ENCODE measurements at regions of chr20 and their contacts with region 1.

Region 1: DNA sequence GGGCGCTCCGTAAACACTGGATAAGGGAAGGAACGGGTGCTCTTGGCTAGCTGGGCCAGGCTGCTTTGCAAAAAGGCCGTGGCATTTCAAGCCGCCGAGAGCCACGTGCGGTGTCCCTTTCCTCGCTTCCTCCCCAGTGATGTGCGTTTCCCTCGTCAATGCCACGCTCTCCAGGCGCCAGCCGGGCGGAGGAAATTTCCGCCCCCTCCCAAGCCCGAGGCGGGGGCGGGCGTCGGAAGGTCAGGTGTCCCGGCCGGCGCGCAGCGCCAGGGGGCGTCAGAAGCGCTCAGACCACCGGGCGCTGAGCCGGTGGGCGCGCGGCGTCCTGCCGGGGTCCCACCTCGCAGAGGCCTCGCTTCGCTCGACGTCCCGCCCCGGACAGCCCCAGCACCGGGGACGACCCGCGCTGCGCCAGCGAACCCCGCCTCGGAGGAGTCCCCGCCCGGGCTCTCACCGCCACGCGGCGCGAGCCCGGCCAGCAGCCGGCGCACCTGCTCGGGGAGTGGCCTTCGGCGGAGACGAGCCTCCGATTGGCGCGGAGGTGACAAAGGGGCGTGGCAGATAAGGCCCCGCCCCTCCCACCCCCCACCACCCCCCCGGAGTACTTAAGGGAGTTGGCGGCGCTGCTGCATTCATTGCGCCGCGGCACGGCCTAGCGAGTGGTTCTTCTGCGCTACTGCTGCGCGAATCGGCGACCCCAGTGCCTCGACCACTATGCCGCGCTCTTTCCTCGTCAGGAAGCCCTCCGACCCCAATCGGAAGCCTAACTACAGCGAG is at the start of gene SNAI1:
- DNase-seq: peak; percentile 83 to 92
- ATAC-seq: peak; percentile 79
- H3K4me3 ChIP-seq: no peak within 1 kb of the TSS
- H3K27ac ChIP-seq: no peak within 1 kb of the TSS
- H3K4me1 ChIP-seq: no peaks in the 10 kb centered on the region
- H3K27me3 ChIP-seq: peaks cover 0 to 1% of the 10 kb centered on the region in 2 donors
- total RNA-seq, gene SNAI1: 10.4 to 44.7 TPM

Region 2: DNA sequence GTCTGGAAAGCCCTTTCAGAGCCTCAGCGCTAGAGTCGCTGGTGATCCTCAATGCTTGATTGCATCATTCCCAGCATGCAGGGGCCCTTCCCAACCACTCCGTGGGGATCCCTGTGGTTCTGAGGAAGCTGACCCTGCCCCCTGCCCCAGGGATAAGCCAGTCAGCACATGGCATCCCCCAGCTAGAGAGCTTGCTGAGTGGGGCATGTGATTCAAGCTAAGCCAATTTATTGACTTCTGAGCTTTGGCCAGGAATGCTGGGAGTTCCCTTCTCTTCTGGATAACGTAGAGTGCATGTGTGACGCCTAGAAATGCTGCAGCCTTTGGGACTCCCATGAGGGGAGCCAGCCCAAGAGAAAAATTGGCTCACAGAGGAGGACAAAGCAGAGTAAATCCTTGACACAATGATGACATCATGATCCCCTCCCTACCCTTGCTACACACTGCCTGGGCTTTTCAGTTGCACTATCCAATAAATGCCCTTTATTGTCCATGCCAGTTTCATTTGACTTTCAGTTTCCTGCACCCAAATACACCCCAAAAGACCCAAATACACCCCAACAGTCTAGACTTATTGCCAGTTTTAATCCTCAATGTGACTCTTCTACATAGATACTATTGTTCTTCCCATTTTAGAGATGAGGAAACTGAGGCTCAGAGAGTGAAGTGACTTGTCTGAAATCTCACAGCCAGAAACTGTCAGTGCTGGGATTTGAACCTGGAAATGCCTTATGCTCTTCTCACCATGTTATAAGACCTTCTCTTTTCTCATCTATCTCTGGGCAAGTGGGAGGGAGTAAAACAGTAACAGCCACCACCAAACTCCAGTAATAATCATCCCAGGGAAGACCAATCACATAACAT is 534.4 kb before region 1 on chr20:
- intact Hi-C with region 1: no loop called
- DNase-seq: peak in 1 of 2 donors; percentile 53
- ATAC-seq: peak; percentile 49
- H3K4me3 ChIP-seq: no peak overlapping the region
- H3K27ac ChIP-seq: no peak overlapping the region
- H3K4me1 ChIP-seq: peaks cover 0 to 2% of the 10 kb centered on the region in 2 donors
- H3K27me3 ChIP-seq: no peaks in the 10 kb centered on the region

Region 3: DNA sequence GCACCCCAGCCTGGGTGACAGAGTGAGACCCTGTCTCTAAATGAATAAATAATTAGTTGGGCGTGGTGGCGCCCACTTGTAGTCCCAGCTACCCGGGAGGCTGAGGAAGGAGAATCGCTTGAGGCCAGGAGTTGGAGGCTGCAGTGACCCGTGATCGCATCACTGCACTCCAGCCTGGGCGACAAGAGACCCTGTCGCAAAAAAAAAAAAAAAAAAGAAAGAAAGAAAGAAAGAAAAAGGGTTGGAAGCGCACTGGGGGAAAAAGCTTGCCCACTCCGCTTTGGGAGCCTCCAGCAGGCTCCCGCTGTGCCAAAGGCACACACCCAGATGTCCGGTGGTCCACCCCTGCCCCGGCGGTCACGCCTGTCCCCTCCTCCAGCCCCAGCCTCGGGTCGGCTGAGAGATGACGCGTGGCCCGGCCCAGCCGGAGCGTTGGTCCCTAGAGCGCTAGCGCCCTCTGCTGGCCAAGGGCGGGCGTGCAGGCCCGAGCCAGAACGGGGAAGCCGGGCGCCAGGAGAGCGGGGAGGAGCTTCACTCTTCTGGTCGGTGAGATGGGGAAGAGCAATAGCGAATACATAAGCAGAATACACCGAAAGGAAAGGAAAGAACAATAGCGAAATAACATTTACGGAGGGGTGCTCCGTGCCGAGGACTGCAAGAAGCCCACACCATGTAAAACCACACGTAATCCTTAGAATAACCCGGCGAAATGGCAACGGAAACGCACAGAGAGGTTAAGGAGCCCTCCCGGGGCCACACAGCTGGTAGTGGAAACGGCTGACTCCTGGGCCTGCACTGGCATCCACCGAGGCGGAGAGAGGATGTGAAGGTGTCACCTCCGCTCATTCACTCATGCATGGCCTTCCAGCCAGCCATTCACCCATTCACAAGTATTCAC is 88.7 kb after region 1 on chr20:
- intact Hi-C with region 1: loop called (anchors 1 kb)
- DNase-seq: peak; percentile 93 to 98
- ATAC-seq: peak; percentile 96
- H3K4me3 ChIP-seq: no peak overlapping the region
- H3K27ac ChIP-seq: no peak overlapping the region
- H3K4me1 ChIP-seq: no peaks in the 10 kb centered on the region
- H3K27me3 ChIP-seq: no peaks in the 10 kb centered on the region

Region 4: DNA sequence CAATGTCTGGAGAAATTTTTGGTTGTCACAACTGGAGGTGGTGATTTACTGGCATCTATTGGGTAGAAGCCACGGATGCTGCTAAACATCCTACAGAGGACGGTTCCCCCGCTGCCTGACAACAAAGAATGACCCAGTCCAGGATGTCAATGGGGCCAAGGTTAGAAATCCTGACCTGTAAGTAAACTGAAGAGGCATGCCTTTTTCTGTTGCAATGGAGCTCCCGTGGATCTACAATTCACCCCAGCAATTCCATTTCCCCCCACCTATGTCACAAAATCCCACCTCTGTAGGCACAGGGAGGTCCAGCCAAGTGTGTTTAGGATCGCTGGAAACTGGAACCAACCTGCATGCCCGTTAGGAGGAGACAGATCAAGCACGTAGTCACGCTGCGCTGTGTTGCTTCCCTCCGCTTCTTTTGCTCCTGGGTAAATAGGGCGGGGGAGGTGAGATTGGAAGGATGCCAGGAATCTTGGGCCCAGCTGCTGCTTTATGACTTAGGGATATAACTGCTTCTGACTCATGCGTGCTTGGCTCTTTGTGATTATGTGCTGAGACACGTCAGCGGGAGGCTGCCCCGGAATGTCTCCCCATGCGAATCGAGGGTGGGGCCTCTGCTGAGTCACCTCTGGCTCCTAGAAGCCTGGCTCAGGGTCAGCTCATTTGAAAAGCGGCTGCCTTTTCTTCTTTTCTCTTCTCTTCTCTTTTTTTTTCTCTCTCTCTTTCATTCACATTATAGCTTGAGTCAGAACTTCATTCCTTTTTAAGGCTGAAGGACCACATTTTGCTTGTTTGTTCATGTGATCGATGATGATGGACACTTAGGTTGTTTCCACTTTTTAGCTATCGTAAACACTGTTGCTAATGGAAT is 183.4 kb after region 1 on chr20:
- intact Hi-C with region 1: loop called (anchors 5 to 10 kb)
- DNase-seq: peak; percentile 98
- ATAC-seq: peak; percentile 97
- H3K4me3 ChIP-seq: peak overlapping the region in 1 of 2 donors; percentile 26
- H3K27ac ChIP-seq: peak overlapping the region in 1 of 2 donors; percentile 85
- H3K4me1 ChIP-seq: no peaks in the 10 kb centered on the region
- H3K27me3 ChIP-seq: no peaks in the 10 kb centered on the region

Region 5: DNA sequence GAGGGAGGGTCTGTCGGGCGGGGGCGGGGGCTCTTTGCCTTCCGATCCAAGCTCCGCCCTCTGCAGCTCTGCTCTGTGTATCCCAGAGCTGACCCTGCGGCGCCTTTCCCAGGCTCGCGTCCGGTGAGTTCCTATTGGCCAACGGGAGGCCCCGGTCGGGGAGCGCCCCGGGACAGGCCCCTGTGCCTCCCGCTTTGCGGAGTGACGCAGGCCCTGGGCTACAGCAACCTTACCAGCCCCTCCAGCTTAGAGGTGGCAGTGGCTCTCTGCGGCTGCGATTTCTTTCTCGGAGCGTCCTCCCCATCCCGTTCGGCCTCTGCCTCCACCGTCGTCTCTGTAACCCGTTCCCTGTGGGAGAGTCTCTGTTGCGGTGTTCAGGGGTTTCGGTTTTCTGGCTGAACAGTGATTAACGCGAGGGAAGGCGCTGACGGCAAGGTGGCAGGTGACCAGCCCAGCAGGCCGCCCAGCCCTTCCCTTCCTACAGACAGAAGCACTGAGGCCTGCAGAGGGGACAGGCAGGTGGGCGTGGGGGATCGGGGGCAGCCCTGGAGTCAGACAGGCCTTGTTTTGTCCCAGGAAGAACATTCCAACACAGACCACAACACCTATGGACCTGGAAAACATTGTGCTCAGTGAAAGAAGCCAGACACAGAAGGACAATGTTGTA is 189.9 kb after region 1 on chr20:
- intact Hi-C with region 1: loop called (anchors 5 to 10 kb)
- DNase-seq: peak; percentile 91 to 92
- ATAC-seq: peak; percentile 93
- H3K4me3 ChIP-seq: peak overlapping the region; percentile 20 to 30
- H3K27ac ChIP-seq: peak overlapping the region in 1 of 2 donors; percentile 60
- H3K4me1 ChIP-seq: no peaks in the 10 kb centered on the region
- H3K27me3 ChIP-seq: no peaks in the 10 kb centered on the region

Measured in aorta (tissue), 5 donors.